AG04449 (cell line): ENCODE measurements at regions of chrX and their contacts with region 1.

Region 1: DNA sequence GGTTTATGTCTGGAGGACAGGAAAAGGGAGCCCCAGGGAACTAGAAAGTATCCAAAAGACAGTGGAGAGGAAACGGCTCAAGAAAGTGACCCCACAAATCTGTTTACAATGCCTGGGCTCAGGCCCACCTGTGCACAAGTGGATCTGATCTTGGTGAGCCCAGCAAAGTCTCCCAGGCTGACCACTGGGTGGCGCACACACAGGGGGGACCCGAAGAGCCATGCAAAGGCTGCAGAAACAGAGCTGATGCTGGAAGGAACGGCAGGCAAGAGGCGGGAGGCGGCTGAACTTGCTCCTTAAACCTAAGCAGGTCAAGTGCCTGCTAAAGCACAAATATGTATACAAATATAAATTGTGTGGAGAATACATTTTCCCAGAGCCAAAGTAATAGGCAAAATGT is 9.5 kb downstream of the HAUS7 start:
- DNase-seq: no peak
- H3K4me3 ChIP-seq: no peak overlapping the region
- CTCF ChIP-seq: peak; percentile 74

Region 2: GRCh38 chrX:153494541-153495361 is 33.9 kb after region 1 on chrX and contains the start of gene BGN:
- CTCF ChIA-PET with region 1: interaction called, 21 read pairs
- POLR2A ChIA-PET with region 1: no interaction called
- DNase-seq: no peak
- H3K4me3 ChIP-seq: peak within 1 kb of the TSS; percentile 72
- CTCF ChIP-seq: peak; percentile 59